ENCODE measurements at regions of chr14 and their contacts with region 1.

Region 1: GRCh38 chr14:99537399-99537798 is 56.2 kb downstream of the CCNK start:
- DNase-seq: peak; percentile 27
- H3K4me3 ChIP-seq: no peak overlapping the region
- H3K27ac ChIP-seq: no peak overlapping the region
- H3K4me1 ChIP-seq: peaks cover 4% of the 10 kb centered on the region
- H3K27me3 ChIP-seq: no peaks in the 10 kb centered on the region
- CTCF ChIP-seq: no peak
- POLR2A ChIP-seq: no peak

Region 2: DNA sequence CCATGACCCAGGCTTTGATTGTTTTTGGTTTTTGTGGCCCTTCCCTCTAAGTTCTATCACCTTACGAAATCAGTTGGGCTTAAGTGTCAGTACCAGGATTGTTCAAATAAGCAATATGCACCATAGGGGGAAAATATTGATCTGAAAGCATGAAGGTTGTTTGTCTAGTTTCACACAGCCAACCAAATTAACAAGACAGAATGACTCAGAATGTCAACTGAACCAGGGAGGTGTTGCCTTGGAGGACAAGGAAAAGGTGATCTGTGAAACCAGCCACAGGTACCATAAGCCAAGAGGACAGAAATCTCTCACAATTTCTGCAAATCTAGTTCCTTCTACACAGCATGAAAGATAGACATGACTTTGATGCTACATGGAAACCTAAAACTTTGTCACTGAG is 563.3 kb before region 1 on chr14:
- CTCF ChIA-PET with region 1: no interaction called
- POLR2A ChIA-PET with region 1: no interaction called
- dilution Hi-C with region 1: no loop called
- intact Hi-C with region 1: no loop called
- DNase-seq: no peak
- H3K4me3 ChIP-seq: no peak overlapping the region
- H3K27ac ChIP-seq: no peak overlapping the region
- H3K4me1 ChIP-seq: no peaks in the 10 kb centered on the region
- H3K27me3 ChIP-seq: no peaks in the 10 kb centered on the region
- CTCF ChIP-seq: no peak
- POLR2A ChIP-seq: no peak

Region 3: GRCh38 chr14:99327063-99327843 is 210.1 kb before region 1 on chr14:
- CTCF ChIA-PET with region 1: no interaction called
- POLR2A ChIA-PET with region 1: no interaction called
- dilution Hi-C with region 1: no loop called
- intact Hi-C with region 1: no loop called
- DNase-seq: no peak
- H3K4me3 ChIP-seq: no peak overlapping the region
- H3K27ac ChIP-seq: no peak overlapping the region
- H3K4me1 ChIP-seq: no peaks in the 10 kb centered on the region
- H3K27me3 ChIP-seq: no peaks in the 10 kb centered on the region
- CTCF ChIP-seq: no peak
- POLR2A ChIP-seq: no peak

Region 4: GRCh38 chr14:99378782-99379214 is 158.6 kb before region 1 on chr14:
- CTCF ChIA-PET with region 1: no interaction called
- POLR2A ChIA-PET with region 1: no interaction called
- dilution Hi-C with region 1: no loop called
- intact Hi-C with region 1: no loop called
- DNase-seq: no peak
- H3K4me3 ChIP-seq: no peak overlapping the region
- H3K27ac ChIP-seq: no peak overlapping the region
- H3K4me1 ChIP-seq: no peaks in the 10 kb centered on the region
- H3K27me3 ChIP-seq: no peaks in the 10 kb centered on the region
- CTCF ChIP-seq: no peak
- POLR2A ChIP-seq: no peak

Region 5: GRCh38 chr14:99524804-99525698 is 12.3 kb before region 1 on chr14:
- CTCF ChIA-PET with region 1: interaction called, 3 read pairs
- POLR2A ChIA-PET with region 1: no interaction called
- dilution Hi-C with region 1: no loop called
- intact Hi-C with region 1: loop called (anchors 2 kb)
- DNase-seq: peak; percentile 24
- H3K4me3 ChIP-seq: no peak overlapping the region
- H3K27ac ChIP-seq: no peak overlapping the region
- H3K4me1 ChIP-seq: peaks cover 15% of the 10 kb centered on the region
- H3K27me3 ChIP-seq: no peaks in the 10 kb centered on the region
- CTCF ChIP-seq: peak in 1 of 2 donors; percentile 13
- POLR2A ChIP-seq: no peak

Region 6: GRCh38 chr14:99590712-99591555 is 53.5 kb after region 1 on chr14:
- CTCF ChIA-PET with region 1: no interaction called
- POLR2A ChIA-PET with region 1: no interaction called
- dilution Hi-C with region 1: no loop called
- intact Hi-C with region 1: loop called (anchors 2 kb)
- DNase-seq: peak; percentile 85
- H3K4me3 ChIP-seq: no peak overlapping the region
- H3K27ac ChIP-seq: no peak overlapping the region
- H3K4me1 ChIP-seq: peaks cover 19% of the 10 kb centered on the region
- H3K27me3 ChIP-seq: no peaks in the 10 kb centered on the region
- CTCF ChIP-seq: peak in 1 of 2 donors; percentile 10
- POLR2A ChIP-seq: no peak

Region 7: GRCh38 chr14:99744199-99744879 is 206.9 kb after region 1 on chr14:
- CTCF ChIA-PET with region 1: no interaction called
- POLR2A ChIA-PET with region 1: no interaction called
- dilution Hi-C with region 1: no loop called
- intact Hi-C with region 1: no loop called
- DNase-seq: no peak
- H3K4me3 ChIP-seq: no peak overlapping the region
- H3K27ac ChIP-seq: no peak overlapping the region
- H3K4me1 ChIP-seq: peaks cover 28% of the 10 kb centered on the region
- H3K27me3 ChIP-seq: no peaks in the 10 kb centered on the region
- CTCF ChIP-seq: no peak
- POLR2A ChIP-seq: no peak